ENCODE measurements at regions of chr5 and their contacts with region 1.

Region 1: DNA sequence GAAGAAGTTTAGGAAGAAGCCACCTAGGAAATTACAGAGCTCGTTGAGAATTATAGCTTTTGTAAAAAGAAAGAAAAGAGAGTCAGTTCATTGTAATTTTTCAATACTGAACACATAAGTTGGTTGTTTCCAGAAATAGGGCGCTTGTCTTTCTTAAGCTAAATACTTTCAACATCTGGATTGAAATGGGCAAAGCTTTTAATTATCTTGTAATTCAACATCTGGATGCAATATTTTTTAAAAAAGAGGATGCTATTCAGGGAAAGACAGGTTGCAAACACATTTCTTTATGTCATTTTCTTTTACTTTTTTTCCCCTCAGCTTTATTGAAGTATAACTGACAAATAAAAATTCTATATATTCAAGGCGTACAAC is 100.7 kb upstream of the TRPC7 start:
- DNase-seq: no peak
- ATAC-seq: no peak
- H3K4me3 ChIP-seq: no peak overlapping the region
- H3K4me3 Mint-ChIP-seq: no peak overlapping the region
- H3K27ac ChIP-seq: no peak overlapping the region
- H3K27ac Mint-ChIP-seq: no peak overlapping the region
- H3K4me1 ChIP-seq: no peaks in the 10 kb centered on the region
- H3K4me1 Mint-ChIP-seq: no peaks in the 10 kb centered on the region
- H3K27me3 ChIP-seq: no peaks in the 10 kb centered on the region
- H3K27me3 Mint-ChIP-seq: no peaks in the 10 kb centered on the region
- CTCF ChIP-seq: no peak

Region 2: DNA sequence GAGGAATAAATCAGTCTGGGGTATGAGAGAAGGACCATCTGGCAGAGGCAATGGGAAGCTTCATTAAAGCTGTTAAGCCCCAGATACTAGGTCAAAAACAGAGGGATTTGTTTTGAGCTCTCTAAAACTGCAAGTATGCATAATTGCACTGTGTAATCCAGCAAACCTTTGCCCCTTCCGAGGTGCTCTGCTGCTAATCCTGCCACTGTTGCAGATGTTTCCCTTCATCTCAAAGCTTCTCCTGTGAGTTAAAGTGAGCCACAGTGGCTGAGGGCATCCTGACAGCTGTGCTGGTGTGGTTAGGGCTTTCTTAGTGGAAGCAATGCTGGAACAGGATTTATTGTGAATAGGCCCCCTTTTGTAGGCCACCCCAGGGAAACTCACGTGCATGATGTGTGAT is 59.6 kb after region 1 on chr5:
- CTCF ChIA-PET with region 1: no interaction called
- POLR2A ChIA-PET with region 1: no interaction called
- intact Hi-C with region 1: loop called in 1 of 2 experiments (anchors 2 kb)
- DNase-seq: no peak
- ATAC-seq: no peak
- H3K4me3 ChIP-seq: no peak overlapping the region
- H3K4me3 Mint-ChIP-seq: no peak overlapping the region
- H3K27ac ChIP-seq: no peak overlapping the region
- H3K27ac Mint-ChIP-seq: no peak overlapping the region
- H3K4me1 ChIP-seq: no peaks in the 10 kb centered on the region
- H3K4me1 Mint-ChIP-seq: no peaks in the 10 kb centered on the region
- H3K27me3 ChIP-seq: no peaks in the 10 kb centered on the region
- H3K27me3 Mint-ChIP-seq: no peaks in the 10 kb centered on the region
- CTCF ChIP-seq: no peak

Region 3: DNA sequence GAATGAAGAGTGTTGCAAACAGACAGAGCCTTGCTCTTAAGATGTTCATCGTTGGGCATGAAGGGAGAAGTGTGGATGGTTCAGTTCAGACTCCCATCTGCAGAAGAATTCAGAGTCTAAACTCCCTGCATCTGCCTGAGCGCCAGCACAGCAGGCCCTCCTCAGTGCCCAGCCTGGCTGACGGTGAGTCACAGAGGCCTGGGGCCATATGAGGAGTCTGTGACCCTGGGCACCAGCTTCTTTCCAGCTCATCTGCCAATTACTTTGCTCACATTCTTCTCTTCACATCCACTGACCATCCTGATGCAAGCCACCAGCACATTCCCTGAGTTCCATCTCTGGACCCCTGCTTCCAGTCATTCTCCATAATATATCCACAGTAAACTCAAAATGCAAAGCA is 300.4 kb after region 1 on chr5:
- CTCF ChIA-PET with region 1: no interaction called
- POLR2A ChIA-PET with region 1: no interaction called
- intact Hi-C with region 1: no loop called
- DNase-seq: no peak
- ATAC-seq: no peak
- H3K4me3 ChIP-seq: no peak overlapping the region
- H3K4me3 Mint-ChIP-seq: no peak overlapping the region
- H3K27ac ChIP-seq: no peak overlapping the region
- H3K27ac Mint-ChIP-seq: no peak overlapping the region
- H3K4me1 ChIP-seq: no peaks in the 10 kb centered on the region
- H3K4me1 Mint-ChIP-seq: no peaks in the 10 kb centered on the region
- H3K27me3 ChIP-seq: no peaks in the 10 kb centered on the region
- H3K27me3 Mint-ChIP-seq: no peaks in the 10 kb centered on the region
- CTCF ChIP-seq: no peak

Region 4: DNA sequence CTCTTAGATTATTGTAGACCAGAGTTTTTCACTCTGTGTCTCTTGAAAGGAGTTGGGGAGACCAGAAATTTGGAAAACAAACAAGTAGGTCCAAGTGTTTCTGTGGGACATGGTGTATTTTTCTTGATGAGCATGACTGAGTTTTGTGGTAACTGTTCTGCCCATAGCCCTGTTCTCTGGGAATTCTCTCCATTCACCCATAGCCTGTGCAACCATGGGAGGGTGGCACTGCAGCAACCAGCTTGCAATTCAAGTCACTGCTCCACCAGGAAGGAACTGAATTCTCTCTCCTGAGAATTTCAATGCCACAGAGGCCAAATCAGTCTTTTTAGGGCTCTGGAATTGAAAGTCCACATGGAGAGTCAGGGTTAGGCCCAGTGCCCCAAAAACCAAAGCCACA is 374.6 kb after region 1 on chr5:
- CTCF ChIA-PET with region 1: no interaction called
- POLR2A ChIA-PET with region 1: no interaction called
- intact Hi-C with region 1: no loop called
- DNase-seq: no peak
- ATAC-seq: no peak
- H3K4me3 ChIP-seq: no peak overlapping the region
- H3K4me3 Mint-ChIP-seq: no peak overlapping the region
- H3K27ac ChIP-seq: no peak overlapping the region
- H3K27ac Mint-ChIP-seq: no peak overlapping the region
- H3K4me1 ChIP-seq: no peaks in the 10 kb centered on the region
- H3K4me1 Mint-ChIP-seq: no peaks in the 10 kb centered on the region
- H3K27me3 ChIP-seq: no peaks in the 10 kb centered on the region
- H3K27me3 Mint-ChIP-seq: no peaks in the 10 kb centered on the region
- CTCF ChIP-seq: no peak